ENCODE measurements at regions of chrX and their contacts with region 1.

Region 1: GRCh38 chrX:125132285-125132684 is 187.4 kb upstream of the TEX13C start:
- DNase-seq: peak; percentile 14
- H3K4me3 ChIP-seq: no peak overlapping the region
- H3K27ac ChIP-seq: no peak overlapping the region
- H3K4me1 ChIP-seq: no peaks in the 10 kb centered on the region
- H3K27me3 ChIP-seq: no peaks in the 10 kb centered on the region
- CTCF ChIP-seq: peak; percentile 56
- EP300 ChIP-seq: no peak
- RAD21 ChIP-seq: peak; percentile 26; the same call in 1 of the 2 replicates

Region 2: GRCh38 chrX:124388562-124388961 is 743.7 kb before region 1 on chrX:
- CTCF ChIA-PET with region 1: interaction called, 13 read pairs
- POLR2A ChIA-PET with region 1: no interaction called
- DNase-seq: peak; percentile 21
- H3K4me3 ChIP-seq: no peak overlapping the region
- H3K27ac ChIP-seq: no peak overlapping the region
- H3K4me1 ChIP-seq: no peaks in the 10 kb centered on the region
- H3K27me3 ChIP-seq: no peaks in the 10 kb centered on the region
- CTCF ChIP-seq: peak; percentile 77
- EP300 ChIP-seq: no peak
- RAD21 ChIP-seq: peak; percentile 72

Region 3: GRCh38 chrX:124406294-124407014 is 725.8 kb before region 1 on chrX:
- CTCF ChIA-PET with region 1: interaction called, 15 read pairs
- POLR2A ChIA-PET with region 1: no interaction called
- DNase-seq: peak; percentile 55
- H3K4me3 ChIP-seq: no peak overlapping the region
- H3K27ac ChIP-seq: no peak overlapping the region
- H3K4me1 ChIP-seq: no peaks in the 10 kb centered on the region
- H3K27me3 ChIP-seq: peaks cover 8% of the 10 kb centered on the region; the same call in 1 of the 2 replicates
- CTCF ChIP-seq: peak; percentile 79
- EP300 ChIP-seq: no peak
- RAD21 ChIP-seq: peak; percentile 88

Region 4: DNA sequence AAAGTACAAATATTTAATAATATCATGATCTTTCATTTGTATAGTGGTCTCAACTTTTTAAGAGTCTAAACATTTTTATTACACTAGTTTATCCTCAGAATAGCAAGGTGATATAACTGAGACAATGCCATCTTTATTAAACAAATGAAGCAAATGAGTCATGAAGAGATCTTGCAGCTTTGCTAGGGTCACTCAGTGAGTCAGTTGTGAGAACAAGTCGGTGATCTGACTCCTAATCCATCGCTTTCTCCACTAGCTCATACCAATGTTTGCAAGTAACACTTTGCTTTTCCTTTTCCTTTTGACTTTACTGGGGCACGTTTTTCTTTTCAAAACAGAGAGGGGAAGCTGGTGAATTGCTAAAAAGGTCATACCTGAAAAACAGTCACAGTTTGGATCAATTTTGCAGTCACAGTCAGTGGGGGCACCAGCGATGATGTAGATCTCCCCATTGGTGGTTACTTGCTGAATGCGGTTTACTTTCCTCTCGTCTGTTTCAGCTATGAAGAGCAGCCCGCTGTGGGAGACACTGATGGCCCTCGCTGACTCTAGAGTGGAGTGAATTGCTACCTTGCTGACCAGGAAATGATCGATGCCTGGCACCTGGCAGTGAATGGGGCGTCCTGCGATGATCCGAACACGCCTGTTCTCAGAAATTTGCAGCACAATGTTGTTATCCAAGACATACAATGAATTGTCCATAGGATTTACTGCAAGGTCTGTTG is 710.2 kb before region 1 on chrX:
- CTCF ChIA-PET with region 1: interaction called, 11 read pairs
- POLR2A ChIA-PET with region 1: no interaction called
- DNase-seq: no peak
- H3K4me3 ChIP-seq: no peak overlapping the region
- H3K27ac ChIP-seq: no peak overlapping the region
- H3K4me1 ChIP-seq: no peaks in the 10 kb centered on the region
- H3K27me3 ChIP-seq: no peaks in the 10 kb centered on the region
- CTCF ChIP-seq: no peak
- EP300 ChIP-seq: no peak
- RAD21 ChIP-seq: no peak

Region 5: GRCh38 chrX:125219852-125220251 is 87.6 kb after region 1 on chrX:
- CTCF ChIA-PET with region 1: no interaction called
- POLR2A ChIA-PET with region 1: no interaction called
- DNase-seq: no peak
- H3K4me3 ChIP-seq: no peak overlapping the region
- H3K27ac ChIP-seq: no peak overlapping the region
- H3K4me1 ChIP-seq: no peaks in the 10 kb centered on the region
- H3K27me3 ChIP-seq: no peaks in the 10 kb centered on the region
- CTCF ChIP-seq: no peak
- EP300 ChIP-seq: no peak
- RAD21 ChIP-seq: no peak